Ovary (tissue), 10 donors: ENCODE measurements at regions of chr11 and their contacts with region 1.

Region 1: GRCh38 chr11:134331354-134332188 is at the start of gene GLB1L2:
- DNase-seq: peak; percentile 73 to 89 (median 85)
- H3K4me3 ChIP-seq: peak within 1 kb of the TSS; percentile 64
- H3K27ac ChIP-seq: peak within 1 kb of the TSS in 1 of 2 donors; percentile 8
- H3K4me1 ChIP-seq: peaks cover 8% of the 10 kb centered on the region
- H3K27me3 ChIP-seq: no peaks in the 10 kb centered on the region
- CTCF ChIP-seq: no peak
- EP300 ChIP-seq: no peak
- POLR2A ChIP-seq: no peak
- total RNA-seq, gene GLB1L2: 9.8 to 21.6 (median 15.6) TPM

Region 2: GRCh38 chr11:134223836-134224709 is 107.5 kb before region 1 on chr11 and contains the starts of genes NCAPD3 and VPS26B:
- intact Hi-C with region 1: loop called in 1 of 4 experiments (anchors 5 kb)
- DNase-seq: peak; percentile 93 to 97 (median 94)
- H3K4me3 ChIP-seq: peak within 1 kb of the TSS; percentile 60
- H3K27ac ChIP-seq: peak within 1 kb of the TSS; percentile 59 to 88
- H3K4me1 ChIP-seq: peaks cover 9% of the 10 kb centered on the region
- H3K27me3 ChIP-seq: no peaks in the 10 kb centered on the region
- CTCF ChIP-seq: peak in 2 of 3 donors; percentile 30 to 47
- EP300 ChIP-seq: peak; percentile 87
- POLR2A ChIP-seq: peak; percentile 98
- total RNA-seq, gene NCAPD3: 6.2 to 12.1 (median 9.9) TPM
- total RNA-seq, gene VPS26B: 19.4 to 46.5 (median 36.3) TPM